ENCODE measurements at regions of chr5 and their contacts with region 1.

Region 1: DNA sequence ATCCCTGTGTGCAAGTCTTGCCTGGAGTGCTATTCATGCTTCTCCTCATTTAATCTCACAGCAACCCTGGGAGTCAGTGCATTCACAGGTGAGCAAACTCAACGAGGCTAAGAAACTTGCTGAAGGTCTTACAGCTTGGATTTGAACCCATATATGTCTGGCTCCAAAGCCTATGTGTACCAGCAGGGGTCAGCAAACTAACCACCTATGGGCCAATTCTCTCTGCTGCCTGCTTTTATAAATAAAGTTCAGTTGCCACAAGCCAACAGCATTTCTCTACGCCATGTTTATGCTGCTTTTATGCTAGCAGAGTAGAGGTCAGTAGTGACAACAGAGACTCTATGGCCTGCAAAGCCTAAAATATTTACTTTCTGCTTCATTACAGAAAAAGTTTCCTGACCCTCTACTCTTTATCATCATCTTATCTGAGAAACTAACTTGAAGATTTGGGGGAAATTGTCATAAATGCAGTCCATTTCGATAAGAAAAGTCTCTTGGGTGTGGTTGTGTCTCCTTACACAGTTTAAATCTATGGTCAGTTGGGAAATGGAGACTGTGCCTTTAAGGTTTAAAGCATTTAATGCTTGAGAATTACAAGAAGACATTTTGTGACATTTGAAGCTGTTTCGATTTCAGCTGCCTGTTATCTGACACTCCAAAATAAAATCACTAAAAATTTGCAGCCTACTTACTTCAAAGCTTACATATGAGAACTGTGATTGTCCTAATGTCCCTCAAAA is 137.7 kb downstream of the PRELID2 start:
- DNase-seq: peak; percentile 19 to 69 (median 34)
- ATAC-seq: peak; percentile 96
- H3K4me3 ChIP-seq: no peak overlapping the region
- H3K27ac ChIP-seq: no peak overlapping the region; the same call in 2 of the 3 replicates
- H3K4me1 ChIP-seq: 0 out of 5 replicates have a peak, but pooled peaks cover 0 to 2% of the 10 kb centered on the region in 2 experiments
- H3K27me3 ChIP-seq: no peaks in the 10 kb centered on the region
- CTCF ChIP-seq: peak; percentile 74 to 79 (median 77)
- EP300 ChIP-seq: no peak
- POLR2A ChIP-seq: no peak
- RAD21 ChIP-seq: peak; percentile 74 to 87

Region 2: DNA sequence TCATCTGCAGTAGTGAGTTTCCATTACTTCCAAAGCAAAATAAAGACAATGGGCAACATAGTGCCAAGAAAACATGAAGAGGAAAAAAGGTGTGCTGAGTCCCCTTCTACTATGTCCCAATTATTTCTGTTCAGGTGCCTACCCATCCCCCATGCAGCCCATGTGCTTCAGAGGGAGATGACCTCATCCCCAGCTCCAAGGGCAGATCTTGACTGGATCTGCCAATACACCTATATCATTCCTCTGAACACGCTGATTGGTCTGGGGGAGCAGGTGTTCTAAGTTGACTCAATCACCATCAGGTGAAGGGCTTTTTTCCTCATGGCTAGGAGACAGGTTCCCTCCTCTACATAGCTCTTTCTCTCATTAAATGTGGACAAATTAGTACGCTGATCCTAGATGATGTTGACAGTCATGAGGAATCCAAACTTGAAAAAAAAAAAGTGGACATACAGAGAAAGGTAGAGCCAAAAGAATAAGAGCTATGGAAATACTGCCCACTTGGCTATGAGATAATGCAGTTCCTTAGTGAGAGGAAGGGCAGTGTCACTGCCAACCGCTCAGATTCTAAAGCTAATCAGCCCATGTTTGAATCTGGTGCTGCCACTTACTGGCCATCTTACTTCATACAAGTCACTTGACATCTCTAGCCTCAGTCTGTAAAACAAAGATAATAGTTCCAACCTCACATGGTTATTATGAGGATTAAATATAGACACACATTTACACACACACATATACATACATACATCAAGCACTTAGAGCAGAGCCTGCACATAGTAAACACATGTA is 114.6 kb after region 1 on chr5:
- CTCF ChIA-PET with region 1: no interaction called
- POLR2A ChIA-PET with region 1: no interaction called
- in situ Hi-C with region 1: no loop called
- intact Hi-C with region 1: loop called (anchors 5 kb)
- DNase-seq: no peak
- ATAC-seq: peak; percentile 73
- H3K4me3 ChIP-seq: no peak overlapping the region
- H3K27ac ChIP-seq: no peak overlapping the region
- H3K4me1 ChIP-seq: no peaks in the 10 kb centered on the region; a peak in 1 of 5 replicates
- H3K27me3 ChIP-seq: no peaks in the 10 kb centered on the region
- CTCF ChIP-seq: peak in 1 of 3 experiments; percentile 36; a peak in 2 of 6 replicates
- EP300 ChIP-seq: no peak
- POLR2A ChIP-seq: no peak
- RAD21 ChIP-seq: peak; percentile 31 to 56; a peak in 3 of 4 replicates

Region 3: GRCh38 chr5:145825751-145826180 is 128.3 kb after region 1 on chr5:
- CTCF ChIA-PET with region 1: no interaction called
- POLR2A ChIA-PET with region 1: no interaction called
- in situ Hi-C with region 1: no loop called
- intact Hi-C with region 1: loop called (anchors 1 kb)
- DNase-seq: peak; percentile 37 to 69 (median 41)
- ATAC-seq: peak; percentile 75
- H3K4me3 ChIP-seq: no peak overlapping the region
- H3K27ac ChIP-seq: no peak overlapping the region
- H3K4me1 ChIP-seq: peaks cover 3 to 21% of the 10 kb centered on the region in 2 experiments; a peak in 3 of 5 replicates
- H3K27me3 ChIP-seq: no peaks in the 10 kb centered on the region
- CTCF ChIP-seq: peak; percentile 77 to 99 (median 97)
- EP300 ChIP-seq: no peak
- POLR2A ChIP-seq: no peak
- RAD21 ChIP-seq: peak; percentile 79 to 80

Region 4: DNA sequence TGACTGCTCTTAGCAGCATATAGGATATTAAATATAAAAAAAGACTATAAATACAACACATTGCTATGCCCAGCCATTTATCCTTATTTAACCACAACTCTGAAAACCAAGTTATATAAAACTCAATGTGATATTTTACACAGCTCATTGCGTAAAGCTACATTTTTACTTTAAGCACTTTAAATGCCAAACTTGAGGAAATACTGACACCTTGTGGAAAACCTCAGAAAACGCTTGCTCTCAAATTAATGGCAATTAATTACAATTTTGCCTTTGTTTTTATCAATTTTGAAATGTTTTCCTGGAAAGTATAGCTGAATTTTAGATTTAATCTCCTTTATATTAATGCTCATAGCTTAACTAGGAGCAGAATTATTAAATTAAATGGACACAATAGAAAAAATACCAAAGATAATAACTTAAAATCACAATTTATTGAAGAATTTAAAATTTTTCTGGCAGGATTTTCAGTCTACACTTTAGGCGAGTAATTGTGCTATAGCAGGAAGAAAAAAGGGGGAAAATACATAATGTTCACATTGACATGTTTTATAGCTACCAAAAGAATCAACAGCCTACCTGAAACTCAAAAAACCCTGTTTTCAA is 433.1 kb after region 1 on chr5:
- CTCF ChIA-PET with region 1: no interaction called
- POLR2A ChIA-PET with region 1: no interaction called
- in situ Hi-C with region 1: no loop called
- intact Hi-C with region 1: loop called (anchors 5 kb)
- DNase-seq: peak in 1 of 4 experiments; percentile 21
- ATAC-seq: peak; percentile 50; the same call in 2 of the 3 replicates
- H3K4me3 ChIP-seq: no peak overlapping the region
- H3K27ac ChIP-seq: no peak overlapping the region
- H3K4me1 ChIP-seq: no peaks in the 10 kb centered on the region
- H3K27me3 ChIP-seq: no peaks in the 10 kb centered on the region
- CTCF ChIP-seq: peak in 2 of 3 experiments; percentile 35 to 63; a peak in 4 of 6 replicates
- EP300 ChIP-seq: no peak
- POLR2A ChIP-seq: no peak
- RAD21 ChIP-seq: peak; percentile 58 to 72; a peak in 3 of 4 replicates

Measured in K562 (cell line).